CD8-positive, alpha-beta memory T cell (primary cell): ENCODE measurements at regions of chr15 and their contacts with region 1.

Region 1: DNA sequence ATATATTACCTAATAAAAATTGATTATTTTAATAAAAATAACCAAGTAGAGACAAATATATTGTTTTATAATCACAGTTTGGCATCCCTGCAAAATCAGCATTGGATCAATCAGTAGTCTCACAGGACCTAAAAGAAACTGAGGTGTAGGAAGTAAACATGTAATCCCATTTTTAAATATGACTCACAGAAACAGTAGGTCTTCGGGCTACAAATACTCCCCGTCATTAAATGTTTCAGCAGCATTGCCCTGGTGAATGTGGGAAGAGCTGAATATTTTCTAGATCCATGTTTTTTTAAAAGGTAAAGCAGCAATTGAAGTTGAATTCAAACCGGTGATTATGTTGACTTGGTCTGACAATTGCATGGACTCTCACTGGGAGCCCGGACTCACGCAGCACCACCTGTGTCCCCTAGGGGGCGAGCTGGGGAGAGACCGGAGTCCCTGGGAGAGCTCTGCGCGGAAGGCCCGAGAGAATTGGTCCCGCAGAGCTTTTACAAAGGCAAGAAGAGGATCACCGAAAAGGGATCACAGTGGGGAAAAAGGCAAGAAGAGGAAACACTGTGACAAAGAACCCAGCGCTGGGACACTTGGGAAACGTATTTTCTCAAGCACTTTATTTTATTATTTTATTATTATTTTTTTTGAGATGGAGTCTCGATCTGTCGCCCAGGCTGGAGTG is 17.2 kb upstream of the USP3 start:
- DNase-seq: peak; percentile 78 to 91 (median 83)
- H3K4me3 ChIP-seq: no peak overlapping the region
- H3K4me3 Mint-ChIP-seq: peak overlapping the region in 6 of 7 donors; percentile 49 to 79 (median 67)
- H3K27ac ChIP-seq: no peak overlapping the region
- H3K27ac Mint-ChIP-seq: peak overlapping the region in 6 of 8 donors; percentile 78 to 92 (median 89)
- H3K4me1 ChIP-seq: peaks cover 60% of the 10 kb centered on the region
- H3K4me1 Mint-ChIP-seq: peaks cover 41 to 66% (median 66%) of the 10 kb centered on the region in 3 donors
- H3K27me3 ChIP-seq: no peaks in the 10 kb centered on the region
- H3K27me3 Mint-ChIP-seq: no peaks in the 10 kb centered on the region

Region 2: GRCh38 chr15:63420333-63420747 is 66.9 kb before region 1 on chr15:
- CTCF ChIA-PET with region 1: no interaction called
- POLR2A ChIA-PET with region 1: no interaction called
- DNase-seq: no peak
- H3K4me3 ChIP-seq: no peak overlapping the region
- H3K4me3 Mint-ChIP-seq: no peak overlapping the region
- H3K27ac ChIP-seq: no peak overlapping the region
- H3K27ac Mint-ChIP-seq: no peak overlapping the region
- H3K4me1 ChIP-seq: no peaks in the 10 kb centered on the region
- H3K4me1 Mint-ChIP-seq: no peaks in the 10 kb centered on the region
- H3K27me3 ChIP-seq: no peaks in the 10 kb centered on the region
- H3K27me3 Mint-ChIP-seq: peaks cover 0 to 5% of the 10 kb centered on the region in 2 donors

Region 3: DNA sequence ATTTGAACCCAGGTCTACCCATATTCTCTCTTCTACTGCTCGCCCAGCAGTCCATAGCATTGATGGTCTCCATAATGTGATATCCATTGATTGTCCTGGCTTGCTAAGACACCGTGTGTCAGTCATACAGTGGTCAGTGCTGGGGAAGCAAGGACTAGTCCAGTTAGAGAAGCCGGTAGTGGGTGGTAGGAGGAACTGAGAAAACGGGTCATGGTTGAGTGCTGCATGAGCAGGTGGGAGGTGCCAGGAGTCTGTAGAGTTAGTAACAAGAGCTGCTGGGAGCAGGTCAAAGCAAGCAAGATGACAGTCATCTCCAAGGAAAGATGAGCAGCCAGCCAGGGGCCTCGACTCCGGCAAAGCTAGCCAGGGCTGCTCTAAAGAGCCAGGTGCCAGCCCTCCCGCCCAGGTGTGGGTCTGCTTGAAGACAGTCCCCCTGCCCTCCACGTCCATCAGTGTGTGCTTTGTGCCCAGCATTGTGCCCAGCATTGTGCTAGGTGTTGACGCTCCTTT is 12.4 kb before region 1 on chr15:
- CTCF ChIA-PET with region 1: interaction called, 11 read pairs
- POLR2A ChIA-PET with region 1: no interaction called
- DNase-seq: no peak
- H3K4me3 ChIP-seq: no peak overlapping the region
- H3K4me3 Mint-ChIP-seq: no peak overlapping the region
- H3K27ac ChIP-seq: no peak overlapping the region
- H3K27ac Mint-ChIP-seq: peak overlapping the region in 5 of 8 donors; percentile 37 to 97 (median 74)
- H3K4me1 ChIP-seq: peaks cover 42% of the 10 kb centered on the region
- H3K4me1 Mint-ChIP-seq: peaks cover 30 to 58% (median 54%) of the 10 kb centered on the region in 3 donors
- H3K27me3 ChIP-seq: no peaks in the 10 kb centered on the region
- H3K27me3 Mint-ChIP-seq: no peaks in the 10 kb centered on the region

Region 4: GRCh38 chr15:63497642-63498467 is 10.6 kb after region 1 on chr15:
- CTCF ChIA-PET with region 1: interaction called, 113 read pairs
- POLR2A ChIA-PET with region 1: interaction called, 33 read pairs
- DNase-seq: peak; percentile 69 to 91 (median 85)
- H3K4me3 ChIP-seq: peak overlapping the region; percentile 23
- H3K4me3 Mint-ChIP-seq: no peak overlapping the region
- H3K27ac ChIP-seq: peak overlapping the region; percentile 55
- H3K27ac Mint-ChIP-seq: no peak overlapping the region
- H3K4me1 ChIP-seq: peaks cover 95% of the 10 kb centered on the region
- H3K4me1 Mint-ChIP-seq: peaks cover 59 to 76% (median 76%) of the 10 kb centered on the region in 3 donors
- H3K27me3 ChIP-seq: no peaks in the 10 kb centered on the region
- H3K27me3 Mint-ChIP-seq: no peaks in the 10 kb centered on the region

Region 5: DNA sequence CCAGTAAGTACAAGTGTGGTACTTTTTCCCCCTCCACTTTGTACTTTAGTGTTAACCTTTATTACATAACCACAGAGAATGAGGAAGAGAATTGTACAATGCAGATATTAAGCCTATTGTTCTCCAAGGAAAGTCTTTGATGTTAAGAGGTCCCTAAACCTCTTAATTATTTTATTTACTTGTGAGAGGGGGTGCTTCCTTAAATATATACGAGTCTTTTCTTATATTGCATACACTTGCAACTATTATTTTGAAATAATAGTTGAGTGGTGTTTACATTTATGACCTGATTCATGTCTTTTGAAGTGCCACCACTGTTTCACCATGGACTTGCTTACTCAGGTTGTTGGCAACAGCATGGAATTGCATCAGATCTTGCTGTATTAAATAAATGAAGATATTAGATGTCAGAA is 27.3 kb after region 1 on chr15:
- CTCF ChIA-PET with region 1: interaction called, 10 read pairs
- POLR2A ChIA-PET with region 1: no interaction called
- DNase-seq: no peak
- H3K4me3 ChIP-seq: no peak overlapping the region
- H3K4me3 Mint-ChIP-seq: peak overlapping the region; percentile 14 to 60 (median 38)
- H3K27ac ChIP-seq: no peak overlapping the region
- H3K27ac Mint-ChIP-seq: peak overlapping the region in 7 of 8 donors; percentile 20 to 86 (median 72)
- H3K4me1 ChIP-seq: peaks cover 92% of the 10 kb centered on the region
- H3K4me1 Mint-ChIP-seq: peaks cover 88 to 100% (median 99%) of the 10 kb centered on the region in 3 donors
- H3K27me3 ChIP-seq: no peaks in the 10 kb centered on the region
- H3K27me3 Mint-ChIP-seq: no peaks in the 10 kb centered on the region

Region 6: DNA sequence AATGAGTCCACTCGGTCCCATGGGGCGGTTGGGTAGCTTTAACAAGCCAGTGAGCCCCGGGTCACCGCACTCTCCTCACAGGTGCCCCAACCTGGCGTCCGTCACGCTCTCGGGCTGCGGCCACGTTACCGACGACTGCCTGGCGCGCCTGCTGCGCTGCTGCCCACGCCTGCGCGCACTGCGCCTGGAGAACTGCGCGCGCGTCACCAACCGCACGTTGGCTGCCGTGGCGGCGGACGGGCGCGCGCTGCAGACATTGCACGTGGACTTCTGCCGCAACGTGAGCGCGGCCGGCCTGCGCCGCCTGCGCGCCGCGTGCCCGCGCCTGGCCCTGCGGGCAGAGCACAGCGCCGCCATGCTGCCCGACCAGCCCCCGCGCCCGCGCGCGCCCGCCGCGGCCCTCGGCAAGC is 113.4 kb after region 1 on chr15:
- CTCF ChIA-PET with region 1: interaction called, 10 read pairs
- POLR2A ChIA-PET with region 1: no interaction called
- DNase-seq: peak; percentile 84 to 94 (median 93)
- H3K4me3 ChIP-seq: peak overlapping the region; percentile 86
- H3K4me3 Mint-ChIP-seq: peak overlapping the region; percentile 88 to 100 (median 95)
- H3K27ac ChIP-seq: peak overlapping the region; percentile 84
- H3K27ac Mint-ChIP-seq: peak overlapping the region; percentile 91 to 99 (median 96)
- H3K4me1 ChIP-seq: peaks cover 32% of the 10 kb centered on the region
- H3K4me1 Mint-ChIP-seq: peaks cover 46 to 70% (median 48%) of the 10 kb centered on the region in 3 donors
- H3K27me3 ChIP-seq: no peaks in the 10 kb centered on the region
- H3K27me3 Mint-ChIP-seq: no peaks in the 10 kb centered on the region